Gastrocnemius medialis (tissue), 4 donors: ENCODE measurements at regions of chr16 and their contacts with region 1.

Region 1: DNA sequence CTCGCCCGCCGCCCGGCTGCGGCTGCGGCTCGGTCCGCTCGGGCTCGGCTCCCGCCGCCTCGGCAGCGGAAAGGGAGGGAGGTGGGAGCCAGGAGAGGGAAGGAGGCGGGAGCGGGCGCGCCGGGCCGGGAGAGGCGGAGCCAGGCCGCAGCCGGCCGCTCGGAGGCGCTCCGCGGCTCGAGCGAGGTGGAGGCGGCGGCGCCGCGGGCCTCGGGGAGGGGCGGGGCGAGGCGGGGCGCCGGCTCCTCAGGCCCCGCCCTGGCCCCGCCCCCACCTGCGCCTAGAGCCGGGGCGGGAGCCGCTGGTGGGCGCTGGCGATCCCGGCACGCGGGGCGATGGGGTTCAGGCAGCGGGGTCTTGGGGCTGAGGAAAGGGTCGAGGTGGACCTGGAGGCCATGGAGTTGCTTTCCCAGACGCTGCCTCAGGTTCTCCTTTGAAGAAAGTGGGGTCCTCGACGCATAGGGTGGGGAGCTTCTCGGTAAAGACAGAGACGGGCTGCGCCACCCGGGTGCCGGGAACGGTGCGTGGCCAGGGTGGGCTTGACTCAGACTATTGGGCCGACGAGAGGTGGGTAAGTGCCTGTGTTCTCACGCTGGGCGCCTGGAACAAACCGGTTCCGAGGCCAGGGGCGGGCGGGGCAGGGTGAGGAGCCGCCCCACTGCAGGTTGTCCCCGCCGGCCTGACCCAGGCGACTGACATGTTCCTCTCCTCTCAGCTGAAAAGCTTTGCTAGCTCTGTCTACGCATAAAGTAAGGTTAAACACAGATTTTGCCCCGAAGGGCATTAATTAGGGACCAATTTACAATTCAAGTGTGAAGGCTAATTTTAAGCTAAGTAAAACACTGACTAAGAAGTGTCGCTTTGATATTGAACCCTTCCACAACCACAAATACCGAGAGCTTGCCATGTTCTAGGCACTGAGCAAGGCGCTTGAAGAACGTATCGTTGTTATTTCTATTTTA is at the start of gene CMTM4:
- DNase-seq: peak; percentile 75 to 85
- ATAC-seq: peak; percentile 93
- H3K4me3 ChIP-seq: peak within 1 kb of the TSS; percentile 68 to 88 (median 81)
- H3K27ac ChIP-seq: peak within 1 kb of the TSS; percentile 65 to 81 (median 77)
- H3K4me1 ChIP-seq: peaks cover 8 to 14% of the 10 kb centered on the region in 2 donors
- H3K27me3 ChIP-seq: no peaks in the 10 kb centered on the region
- CTCF ChIP-seq: peak in 2 of 5 experiments; percentile 30 to 45
- POLR2A ChIP-seq: peak in 1 of 2 donors; percentile 21
- total RNA-seq, gene CMTM4: 5.7 to 15.0 (median 7.2) TPM

Region 2: GRCh38 chr16:66660422-66661209 is 36.3 kb before region 1 on chr16:
- in situ Hi-C with region 1: no loop called
- intact Hi-C with region 1: loop called (anchors 1 kb)
- DNase-seq: peak; percentile 43 to 74
- ATAC-seq: peak; percentile 93 to 97
- H3K4me3 ChIP-seq: no peak overlapping the region
- H3K27ac ChIP-seq: peak overlapping the region; percentile 62 to 73 (median 68)
- H3K4me1 ChIP-seq: peaks cover 10 to 17% of the 10 kb centered on the region in 2 donors
- H3K27me3 ChIP-seq: no peaks in the 10 kb centered on the region
- CTCF ChIP-seq: peak in 1 of 5 experiments; percentile 33
- POLR2A ChIP-seq: no peak